Posterior cingulate gyrus (tissue), 11 donors: ENCODE measurements at regions of chr3 and their contacts with region 1.

Region 1: DNA sequence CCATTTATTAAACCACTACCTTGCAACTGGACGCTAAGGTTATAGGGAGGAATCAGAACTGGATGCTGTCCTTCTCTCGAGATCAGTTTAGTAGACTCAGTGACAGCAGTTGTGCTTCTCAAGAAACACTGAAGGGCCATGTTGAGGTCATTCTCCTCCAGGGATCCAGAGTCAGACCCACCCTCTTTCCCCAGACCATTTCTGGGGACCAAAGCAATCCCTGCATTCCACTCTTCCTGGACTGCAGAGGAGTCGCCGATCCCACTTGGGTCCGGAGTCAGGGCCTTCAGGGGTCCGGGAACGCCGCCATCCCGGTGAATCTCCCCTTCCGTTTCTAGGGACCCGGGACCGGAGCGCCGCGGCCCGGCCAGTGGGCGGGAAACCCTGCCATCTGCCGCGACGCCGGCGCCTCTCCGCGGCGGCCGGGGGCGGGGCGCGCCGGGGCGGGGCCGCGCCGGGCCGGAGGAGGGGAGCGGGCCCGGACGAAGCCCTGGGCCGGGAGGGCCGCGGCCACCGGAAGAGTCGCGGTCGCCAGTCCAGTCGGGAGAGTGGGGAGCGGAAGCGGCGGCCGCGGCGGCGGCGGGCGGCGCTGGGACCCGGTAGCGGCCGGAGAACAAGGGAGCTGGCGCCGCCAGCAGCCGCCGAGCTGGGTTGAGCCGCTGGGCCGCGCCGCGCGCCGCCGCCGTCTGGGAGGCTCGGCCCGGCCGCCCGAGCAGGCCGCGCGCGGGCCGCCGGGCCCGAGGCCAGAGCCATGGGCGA is at the start of gene DVL3:
- DNase-seq: peak; percentile 42 to 95 (median 52)

Region 2: GRCh38 chr3:184017672-184018423 is 137.2 kb before region 1 on chr3 and contains the start of gene ABCC5:
- intact Hi-C with region 1: loop called (anchors 5 kb)
- DNase-seq: peak; percentile 92 to 99 (median 95)

Region 3: GRCh38 chr3:184135149-184135910 is 19.7 kb before region 1 on chr3 and contains the start of gene EIF2B5:
- intact Hi-C with region 1: loop called (anchors 1 kb)
- DNase-seq: peak; percentile 91 to 99 (median 94)

Region 4: DNA sequence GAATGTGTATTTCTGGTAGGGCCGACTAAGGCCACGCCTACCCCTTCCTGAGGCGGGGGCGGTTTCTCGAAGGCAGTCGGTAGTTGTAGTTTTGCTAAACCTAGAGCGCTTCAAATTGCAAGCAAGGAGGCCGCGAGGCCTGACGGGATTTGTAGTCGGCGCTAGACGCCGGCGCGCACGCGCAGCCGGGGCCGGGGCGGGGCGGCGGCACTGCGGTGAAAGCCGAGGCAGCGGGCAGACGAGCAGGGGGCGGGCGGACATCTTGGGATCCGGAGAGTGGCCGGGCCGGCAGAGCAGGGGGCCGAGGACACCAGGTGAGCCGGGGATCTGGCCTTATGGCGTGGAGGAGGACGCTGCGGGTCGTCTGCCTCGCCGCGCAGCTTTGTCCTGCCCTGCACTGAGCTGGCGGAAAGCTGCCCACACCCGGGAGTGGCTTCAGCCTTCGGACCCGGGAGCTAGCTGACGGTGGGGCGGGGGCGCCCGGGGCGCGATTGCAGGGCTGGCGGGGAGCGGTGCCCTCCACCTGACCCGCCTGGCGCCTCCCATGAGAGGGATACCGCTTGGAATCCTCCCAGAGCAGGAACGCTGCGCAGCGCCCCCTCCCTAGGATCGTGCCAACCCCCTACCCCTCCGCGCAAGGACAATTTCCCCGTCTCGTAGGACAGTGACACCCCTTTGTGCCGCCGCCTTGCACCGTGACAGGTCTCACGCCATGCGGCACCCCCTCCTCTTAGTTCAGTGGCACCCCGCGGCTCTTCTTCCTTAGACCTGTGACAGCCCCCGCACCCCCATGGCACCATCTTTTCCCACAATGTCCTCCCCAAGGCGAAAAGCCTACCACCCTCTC is 19.8 kb after region 1 on chr3 and contains the start of gene AP2M1:
- intact Hi-C with region 1: loop called (anchors 1 kb)
- DNase-seq: peak; percentile 97 to 100 (median 98)